ENCODE measurements at regions of chr4 and their contacts with region 1.

Region 1: DNA sequence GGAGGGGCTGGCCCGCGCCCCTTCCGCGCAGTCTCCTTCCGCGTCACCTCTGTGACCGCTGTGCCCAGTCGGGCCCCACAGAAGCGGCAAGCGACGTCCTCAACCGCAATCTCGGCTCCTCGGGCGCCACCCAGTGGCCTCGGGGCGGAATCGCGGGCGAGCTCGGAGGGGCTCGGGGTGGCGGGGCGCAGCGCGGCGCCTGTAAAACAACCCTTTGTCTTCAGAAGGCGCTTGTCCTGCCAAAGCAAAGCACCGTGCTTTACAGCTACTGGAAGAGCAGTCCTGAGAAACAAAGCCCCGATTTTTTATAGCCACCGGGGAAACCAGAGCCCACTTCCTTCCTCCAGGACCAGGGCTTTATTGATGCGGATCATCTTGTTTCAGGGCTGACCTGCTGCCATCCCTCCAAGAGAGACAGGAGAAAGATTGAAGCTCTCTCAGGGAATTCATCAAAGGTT is 37.3 kb upstream of the CDKN2AIP start:
- DNase-seq: peak; percentile 75
- H3K4me3 Mint-ChIP-seq: peak overlapping the region; percentile 38
- H3K27ac Mint-ChIP-seq: no peak overlapping the region
- H3K4me1 Mint-ChIP-seq: peaks cover 13% of the 10 kb centered on the region
- H3K27me3 Mint-ChIP-seq: no peaks in the 10 kb centered on the region
- CTCF ChIP-seq: peak; percentile 98

Region 2: DNA sequence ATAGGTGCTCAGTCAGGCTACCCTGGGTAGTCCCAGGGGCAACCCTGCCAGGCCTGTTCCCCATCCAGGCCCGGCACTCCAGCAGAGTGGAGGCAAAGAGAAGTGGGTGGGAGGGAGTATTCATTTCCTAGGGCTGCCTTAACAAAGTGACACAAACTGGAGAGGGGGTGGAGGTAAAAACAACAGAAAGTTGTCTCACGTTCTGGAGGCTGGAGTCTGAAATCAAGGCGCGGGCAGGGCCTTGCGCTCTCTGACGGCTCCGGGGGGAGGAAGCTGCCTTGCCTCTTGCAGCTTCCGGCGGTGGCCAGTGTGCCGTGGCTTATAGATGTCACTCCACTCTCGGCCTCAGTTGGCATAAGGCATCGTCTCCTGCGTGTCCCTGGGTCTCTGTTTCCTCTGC is 580.8 kb before region 1 on chr4:
- CTCF ChIA-PET with region 1: no interaction called
- POLR2A ChIA-PET with region 1: no interaction called
- intact Hi-C with region 1: no loop called
- DNase-seq: no peak
- H3K4me3 Mint-ChIP-seq: no peak overlapping the region
- H3K27ac Mint-ChIP-seq: no peak overlapping the region
- H3K4me1 Mint-ChIP-seq: no peaks in the 10 kb centered on the region
- H3K27me3 Mint-ChIP-seq: peaks cover 18% of the 10 kb centered on the region
- CTCF ChIP-seq: no peak

Region 3: DNA sequence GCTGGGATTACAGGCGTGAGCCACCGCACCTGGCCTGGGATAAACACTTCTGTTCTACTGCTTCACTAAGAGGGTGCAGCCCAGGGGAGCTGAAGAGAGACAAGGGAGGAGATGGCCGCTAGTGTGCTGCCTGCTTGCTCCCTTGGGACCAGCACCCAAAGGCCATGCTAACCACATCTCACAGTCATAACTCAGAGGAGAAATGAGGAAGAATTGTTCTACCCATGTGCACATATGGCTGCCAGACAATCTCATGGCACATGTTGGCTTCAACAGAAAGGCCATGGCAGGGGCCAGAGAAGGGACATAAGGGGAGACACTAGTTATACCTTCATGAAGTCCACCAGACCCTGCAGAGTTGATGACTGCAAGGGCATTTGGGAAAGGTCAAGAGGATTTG is 109.5 kb before region 1 on chr4:
- CTCF ChIA-PET with region 1: interaction called, 5 read pairs
- POLR2A ChIA-PET with region 1: no interaction called
- intact Hi-C with region 1: loop called (anchors 10 kb)
- DNase-seq: no peak
- H3K4me3 Mint-ChIP-seq: no peak overlapping the region
- H3K27ac Mint-ChIP-seq: no peak overlapping the region
- H3K4me1 Mint-ChIP-seq: no peaks in the 10 kb centered on the region
- H3K27me3 Mint-ChIP-seq: no peaks in the 10 kb centered on the region
- CTCF ChIP-seq: no peak

Region 4: DNA sequence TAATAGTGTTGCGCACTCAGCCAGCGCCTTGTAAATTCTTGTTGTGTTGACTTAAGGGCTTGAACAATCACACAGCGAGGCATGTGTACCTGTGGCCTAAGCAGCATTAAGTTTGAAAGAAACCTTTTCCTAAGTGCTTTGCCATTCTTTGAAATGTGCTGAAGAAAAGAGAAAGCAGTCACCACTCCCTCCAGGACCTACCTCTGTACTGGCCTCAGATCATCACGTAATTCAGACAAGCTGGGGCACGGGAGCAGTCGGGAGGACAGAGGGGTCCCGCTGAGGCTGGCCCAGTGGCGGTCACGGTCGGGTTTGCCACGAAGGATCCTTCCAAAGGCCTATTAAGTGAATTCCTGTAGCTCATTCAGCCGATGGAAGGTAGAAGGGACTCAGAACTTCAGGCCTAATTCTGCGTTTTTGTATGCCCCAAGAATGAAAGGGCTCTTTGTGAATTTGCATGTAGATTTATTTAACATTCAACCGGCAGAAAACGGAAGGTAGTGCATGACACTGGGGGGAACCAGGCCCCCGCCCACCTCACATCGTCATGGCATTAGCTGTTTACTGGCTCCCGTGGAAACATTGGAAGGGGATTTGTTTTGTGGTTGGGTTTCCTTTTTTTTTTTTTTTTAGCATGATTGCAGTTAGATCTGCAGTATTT is 358.2 kb after region 1 on chr4:
- CTCF ChIA-PET with region 1: no interaction called
- POLR2A ChIA-PET with region 1: no interaction called
- intact Hi-C with region 1: no loop called
- DNase-seq: no peak
- H3K4me3 Mint-ChIP-seq: no peak overlapping the region
- H3K27ac Mint-ChIP-seq: no peak overlapping the region
- H3K4me1 Mint-ChIP-seq: no peaks in the 10 kb centered on the region
- H3K27me3 Mint-ChIP-seq: no peaks in the 10 kb centered on the region
- CTCF ChIP-seq: no peak

Region 5: DNA sequence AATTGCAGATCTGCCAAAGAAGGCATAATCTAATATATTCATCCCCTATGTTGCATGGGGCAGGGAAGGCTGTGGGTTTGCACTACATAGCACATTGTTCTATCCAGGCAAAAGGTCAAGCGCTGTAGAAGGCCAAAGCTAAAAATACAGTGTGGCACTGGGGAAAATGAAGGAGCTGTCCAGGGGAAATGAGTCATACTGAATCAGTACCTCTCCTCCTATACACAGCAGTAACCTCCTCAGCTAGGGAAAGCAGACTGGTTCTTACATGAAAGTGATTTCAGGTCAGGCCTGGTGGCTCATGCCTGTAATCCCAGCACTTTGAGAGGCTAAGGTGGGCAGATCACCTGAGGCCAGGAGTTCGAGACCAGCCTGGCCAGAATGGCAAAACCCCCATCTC is 1704.9 kb after region 1 on chr4:
- CTCF ChIA-PET with region 1: no interaction called
- POLR2A ChIA-PET with region 1: no interaction called
- intact Hi-C with region 1: no loop called
- DNase-seq: peak; percentile 93
- H3K4me3 Mint-ChIP-seq: no peak overlapping the region
- H3K27ac Mint-ChIP-seq: no peak overlapping the region
- H3K4me1 Mint-ChIP-seq: peaks cover 5% of the 10 kb centered on the region
- H3K27me3 Mint-ChIP-seq: no peaks in the 10 kb centered on the region
- CTCF ChIP-seq: no peak